Naive thymus-derived CD4-positive, alpha-beta T cell (primary cell): ENCODE measurements at regions of chr13 and their contacts with region 1.

Region 1: GRCh38 chr13:50123862-50124536 is 108.8 kb downstream of the KCNRG start:
- DNase-seq: peak in 7 of 9 donors; percentile 46 to 88 (median 64)
- ATAC-seq: peak; percentile 82
- H3K4me3 ChIP-seq: peak overlapping the region; percentile 52
- H3K4me3 Mint-ChIP-seq: peak overlapping the region; percentile 86 to 96 (median 93)
- H3K27ac ChIP-seq: peak overlapping the region; percentile 95
- H3K27ac Mint-ChIP-seq: peak overlapping the region; percentile 90 to 99 (median 97)
- H3K4me1 ChIP-seq: peaks cover 24 to 29% of the 10 kb centered on the region in 2 donors
- H3K4me1 Mint-ChIP-seq: peaks cover 25 to 61% (median 50%) of the 10 kb centered on the region in 7 donors
- H3K27me3 ChIP-seq: peaks cover 0 to 11% of the 10 kb centered on the region in 2 donors
- H3K27me3 Mint-ChIP-seq: peaks cover 1 to 15% (median 12%) of the 10 kb centered on the region in 5 donors

Region 2: DNA sequence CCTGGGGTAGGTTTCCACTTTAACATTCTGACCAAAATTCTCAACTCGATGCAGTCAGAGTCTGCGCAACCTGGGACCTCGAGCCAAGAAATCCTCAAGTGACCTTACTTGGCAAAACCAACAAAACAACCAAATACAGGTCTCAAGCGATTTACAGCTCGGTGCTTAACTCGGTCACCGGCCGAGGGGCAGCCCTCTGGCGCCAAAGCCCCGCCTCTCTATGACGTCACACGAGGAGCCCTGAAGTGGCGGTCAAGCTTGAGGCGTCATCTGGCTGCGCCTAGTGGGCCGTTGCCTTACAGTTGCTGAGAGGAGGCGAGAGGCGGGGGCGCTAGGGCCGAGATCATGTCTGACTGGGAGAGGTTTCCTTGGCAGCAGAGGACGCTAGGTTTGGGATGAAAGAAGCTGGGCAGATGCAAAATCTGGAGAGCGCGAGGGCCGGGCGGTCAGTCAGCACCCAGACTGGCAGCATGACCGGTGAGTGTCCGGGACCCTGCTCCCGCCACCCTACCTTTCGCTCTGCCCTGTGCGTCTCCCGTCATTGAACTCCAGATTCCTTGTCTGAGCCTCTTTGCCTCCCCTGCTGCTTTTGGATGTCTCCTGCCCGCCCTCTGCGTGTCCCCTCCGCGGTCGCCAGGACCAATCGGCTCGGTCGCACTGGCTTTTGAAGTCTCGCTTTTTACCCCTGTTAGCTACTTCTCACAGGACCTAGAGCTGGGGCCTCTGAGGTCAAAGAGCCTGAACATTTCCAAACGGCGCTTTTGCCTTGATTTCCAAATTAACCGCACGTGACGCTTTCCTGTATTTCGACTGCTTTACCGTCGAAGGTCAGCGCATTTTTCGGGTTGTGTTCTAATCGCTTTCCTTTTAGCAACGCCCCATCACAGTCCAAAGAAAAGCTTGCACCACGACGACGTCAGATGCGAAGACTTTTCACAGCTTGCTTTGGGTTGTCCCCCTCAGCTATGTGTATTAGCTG is 876.1 kb before region 1 on chr13 and contains the start of gene CDADC1:
- CTCF ChIA-PET with region 1: no interaction called
- POLR2A ChIA-PET with region 1: no interaction called
- intact Hi-C with region 1: loop called in 1 of 2 experiments (anchors 5 kb)
- DNase-seq: peak; percentile 44 to 93 (median 54)
- ATAC-seq: peak; percentile 90
- H3K4me3 ChIP-seq: peak within 1 kb of the TSS; percentile 93
- H3K4me3 Mint-ChIP-seq: peak within 1 kb of the TSS; percentile 94 to 99 (median 98)
- H3K27ac ChIP-seq: peak within 1 kb of the TSS; percentile 75
- H3K27ac Mint-ChIP-seq: peak within 1 kb of the TSS; percentile 92 to 97 (median 95)
- H3K4me1 ChIP-seq: peaks cover 1 to 3% of the 10 kb centered on the region in 2 donors
- H3K4me1 Mint-ChIP-seq: peaks cover 16 to 59% (median 53%) of the 10 kb centered on the region in 7 donors
- H3K27me3 ChIP-seq: no peaks in the 10 kb centered on the region
- H3K27me3 Mint-ChIP-seq: peaks cover 0 to 25% (median 0%) of the 10 kb centered on the region in 5 donors
- total RNA-seq, gene CDADC1: 10.7 to 21.3 (median 14.5) TPM

Region 3: GRCh38 chr13:50106559-50106958 is 17.4 kb before region 1 on chr13:
- CTCF ChIA-PET with region 1: interaction called, 3 read pairs
- POLR2A ChIA-PET with region 1: interaction called, 82 read pairs
- intact Hi-C with region 1: loop called (anchors 1 to 2 kb)
- DNase-seq: peak in 3 of 9 donors; percentile 14 to 37 (median 29)
- ATAC-seq: peak; percentile 64
- H3K4me3 ChIP-seq: no peak overlapping the region
- H3K4me3 Mint-ChIP-seq: peak overlapping the region in 9 of 10 donors; percentile 30 to 81 (median 61)
- H3K27ac ChIP-seq: peak overlapping the region; percentile 38
- H3K27ac Mint-ChIP-seq: peak overlapping the region; percentile 74 to 94 (median 93)
- H3K4me1 ChIP-seq: peaks cover 16 to 21% of the 10 kb centered on the region in 2 donors
- H3K4me1 Mint-ChIP-seq: peaks cover 22 to 75% (median 56%) of the 10 kb centered on the region in 7 donors
- H3K27me3 ChIP-seq: no peaks in the 10 kb centered on the region
- H3K27me3 Mint-ChIP-seq: no peaks in the 10 kb centered on the region

Region 4: GRCh38 chr13:50512474-50513299 is 388.7 kb after region 1 on chr13:
- CTCF ChIA-PET with region 1: no interaction called
- POLR2A ChIA-PET with region 1: no interaction called
- intact Hi-C with region 1: loop called in 1 of 2 experiments (anchors 5 kb)
- DNase-seq: peak in 7 of 9 donors; percentile 11 to 41 (median 27)
- ATAC-seq: peak; percentile 76
- H3K4me3 ChIP-seq: peak overlapping the region; percentile 22
- H3K4me3 Mint-ChIP-seq: no peak overlapping the region
- H3K27ac ChIP-seq: peak overlapping the region; percentile 34
- H3K27ac Mint-ChIP-seq: no peak overlapping the region
- H3K4me1 ChIP-seq: peaks cover 15 to 16% of the 10 kb centered on the region in 2 donors
- H3K4me1 Mint-ChIP-seq: peaks cover 0 to 3% (median 0%) of the 10 kb centered on the region in 7 donors
- H3K27me3 ChIP-seq: no peaks in the 10 kb centered on the region
- H3K27me3 Mint-ChIP-seq: peaks cover 0 to 13% (median 0%) of the 10 kb centered on the region in 5 donors

Region 5: GRCh38 chr13:50893211-50893852 is 769.3 kb after region 1 on chr13:
- CTCF ChIA-PET with region 1: no interaction called
- POLR2A ChIA-PET with region 1: interaction called, 26 read pairs
- intact Hi-C with region 1: loop called (anchors 5 kb)
- DNase-seq: peak in 7 of 9 donors; percentile 34 to 68 (median 55)
- ATAC-seq: peak; percentile 91
- H3K4me3 ChIP-seq: peak overlapping the region; percentile 30
- H3K4me3 Mint-ChIP-seq: peak overlapping the region; percentile 67 to 88 (median 82)
- H3K27ac ChIP-seq: peak overlapping the region; percentile 69
- H3K27ac Mint-ChIP-seq: peak overlapping the region; percentile 82 to 98 (median 95)
- H3K4me1 ChIP-seq: peaks cover 16 to 27% of the 10 kb centered on the region in 2 donors
- H3K4me1 Mint-ChIP-seq: peaks cover 26 to 50% (median 47%) of the 10 kb centered on the region in 7 donors
- H3K27me3 ChIP-seq: no peaks in the 10 kb centered on the region
- H3K27me3 Mint-ChIP-seq: no peaks in the 10 kb centered on the region